Heart right ventricle (tissue), 16 donors: ENCODE measurements at regions of chr20 and their contacts with region 1.

Region 1: DNA sequence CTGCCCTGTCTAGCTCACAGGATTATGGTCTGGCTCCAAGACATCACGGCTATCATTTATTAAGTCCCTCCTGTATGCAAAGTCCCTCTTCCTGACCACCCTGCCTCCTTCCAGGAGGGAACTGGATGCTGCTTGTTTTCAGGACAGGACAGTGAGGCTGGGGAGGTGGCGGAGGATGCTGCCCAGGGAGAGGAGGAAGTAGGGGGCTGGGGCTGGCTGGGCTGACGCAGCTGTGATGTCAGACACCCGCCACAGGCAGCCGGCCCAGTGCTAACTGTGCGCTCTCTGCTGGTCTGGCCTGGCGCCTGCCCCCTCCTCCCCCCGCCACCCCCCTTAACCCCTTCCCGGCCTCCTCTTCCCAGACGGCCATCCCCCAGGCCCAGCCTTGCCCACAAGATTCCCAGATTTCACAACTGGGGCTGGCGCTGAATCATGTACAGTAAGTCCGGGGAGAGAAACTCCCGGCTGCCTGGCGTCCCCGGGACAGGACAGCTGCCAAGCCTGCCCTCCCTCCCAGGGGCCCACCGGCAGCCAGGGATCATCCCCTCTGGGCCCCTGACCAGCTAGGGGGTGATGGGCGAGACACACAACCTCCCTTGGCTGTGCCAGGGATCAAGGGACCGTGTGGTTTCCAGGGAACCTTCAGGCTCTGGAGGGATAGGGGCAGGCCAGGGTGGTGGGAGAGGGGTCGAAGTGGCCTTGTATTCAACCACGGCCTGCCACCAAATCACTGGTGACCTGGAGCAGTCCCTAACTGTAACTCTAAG is 118.1 kb downstream of the CEBPB start:
- DNase-seq: peak; percentile 89 to 90
- ATAC-seq: peak; percentile 57 to 92 (median 80)
- H3K4me3 ChIP-seq: peak overlapping the region in 7 of 10 donors; percentile 0 to 43 (median 28)
- H3K27ac ChIP-seq: peak overlapping the region; percentile 67 to 96 (median 90)
- H3K4me1 ChIP-seq: peaks cover 28 to 90% (median 67%) of the 10 kb centered on the region in 9 donors
- H3K27me3 ChIP-seq: no peaks in the 10 kb centered on the region
- CTCF ChIP-seq: peak in 7 of 9 donors; percentile 8 to 52 (median 30)

Region 2: DNA sequence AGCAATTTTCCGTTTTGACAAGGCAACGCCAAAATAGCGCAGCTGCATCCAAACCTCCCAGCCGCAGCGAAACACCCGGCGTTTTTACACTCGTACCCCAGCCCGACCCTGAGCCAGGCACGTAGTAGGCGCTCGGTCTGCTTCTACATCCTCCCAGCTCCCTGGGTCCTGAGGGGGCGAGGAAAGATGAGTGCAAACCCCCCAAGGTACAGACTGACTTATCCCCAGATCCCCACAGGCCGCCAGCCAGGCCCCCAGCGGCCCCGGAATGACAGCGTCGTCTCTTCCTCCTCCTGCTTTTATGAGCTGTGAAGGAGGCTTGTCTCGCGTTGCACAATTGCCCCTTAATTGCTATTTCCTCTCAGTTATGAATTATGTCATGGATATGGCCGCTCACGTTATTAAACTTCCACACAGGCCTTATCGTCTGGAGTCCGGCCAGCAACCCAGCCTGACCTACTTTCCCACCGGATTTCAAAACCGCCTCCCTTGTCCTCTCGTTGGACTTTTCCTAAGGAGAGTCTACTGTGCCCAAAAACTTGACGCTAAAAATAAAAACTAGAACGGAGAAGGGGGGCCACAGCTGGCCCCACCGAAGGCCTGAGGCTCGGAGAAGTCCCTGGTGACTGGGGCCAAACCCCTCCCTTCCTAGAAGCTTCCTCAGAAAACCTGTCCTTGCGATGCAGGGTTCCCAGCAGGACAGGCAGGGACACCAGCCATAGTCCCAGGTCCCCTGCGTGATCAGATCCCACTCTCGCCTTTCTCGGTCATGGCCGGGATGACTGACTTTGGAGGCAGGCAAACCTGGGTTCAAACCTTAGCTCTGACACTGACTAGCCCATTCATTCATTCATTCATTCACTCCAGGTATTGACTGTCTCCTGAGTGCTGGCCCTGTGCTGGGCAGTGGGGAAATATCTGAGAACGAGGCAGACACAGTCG is 70.6 kb after region 1 on chr20:
- intact Hi-C with region 1: loop called in 2 of 10 experiments (anchors 5 kb)
- DNase-seq: peak; percentile 89 to 94
- ATAC-seq: peak; percentile 84 to 92 (median 90)
- H3K4me3 ChIP-seq: peak overlapping the region in 8 of 10 donors; percentile 5 to 47 (median 33)
- H3K27ac ChIP-seq: peak overlapping the region; percentile 57 to 86 (median 81)
- H3K4me1 ChIP-seq: peaks cover 10 to 57% (median 24%) of the 10 kb centered on the region in 9 donors
- H3K27me3 ChIP-seq: no peaks in the 10 kb centered on the region
- CTCF ChIP-seq: no peak

Region 3: GRCh38 chr20:50395258-50395729 is 86.6 kb after region 1 on chr20:
- intact Hi-C with region 1: loop called in 1 of 10 experiments (anchors 5 kb)
- DNase-seq: peak; percentile 44 to 79
- ATAC-seq: peak in 7 of 8 donors; percentile 33 to 86 (median 78)
- H3K4me3 ChIP-seq: no peak overlapping the region
- H3K27ac ChIP-seq: peak overlapping the region; percentile 77 to 91 (median 82)
- H3K4me1 ChIP-seq: peaks cover 0 to 60% (median 37%) of the 10 kb centered on the region in 9 donors
- H3K27me3 ChIP-seq: no peaks in the 10 kb centered on the region
- CTCF ChIP-seq: no peak

Region 4: DNA sequence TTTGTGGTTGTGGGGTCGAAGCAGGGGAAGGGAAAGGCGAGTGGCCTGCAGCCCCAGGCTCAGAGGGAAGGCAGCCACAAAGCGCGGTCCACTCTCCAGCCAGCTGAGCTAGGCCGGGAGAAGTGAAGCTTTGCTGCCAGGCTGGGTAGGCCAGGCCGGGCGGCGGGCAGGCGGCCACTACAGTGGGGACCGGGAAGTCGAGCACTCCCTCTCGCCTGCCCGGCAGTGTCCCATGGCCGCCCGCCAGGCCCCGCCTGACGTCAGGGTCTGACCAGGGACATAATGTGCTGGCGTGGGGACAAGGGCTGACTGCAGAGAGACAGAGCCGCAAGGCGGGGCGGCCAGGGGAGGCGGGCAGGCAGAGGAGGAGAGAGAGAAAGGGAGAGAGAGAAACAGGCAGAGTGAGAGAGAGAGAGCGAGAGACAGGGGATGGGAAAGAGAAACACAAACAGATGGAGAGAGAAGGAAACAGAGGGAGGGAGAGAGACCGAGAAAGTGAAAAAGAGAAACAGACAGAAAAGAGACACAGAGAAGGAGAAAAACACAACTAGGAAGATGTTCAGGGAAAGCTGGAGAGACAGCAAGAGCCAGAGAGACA is 106.9 kb after region 1 on chr20:
- intact Hi-C with region 1: loop called in 1 of 10 experiments (anchors 10 kb)
- DNase-seq: peak; percentile 99 to 100
- ATAC-seq: peak; percentile 96 to 99 (median 99)
- H3K4me3 ChIP-seq: peak overlapping the region in 4 of 10 donors; percentile 7 to 12 (median 11)
- H3K27ac ChIP-seq: peak overlapping the region; percentile 89 to 99 (median 96)
- H3K4me1 ChIP-seq: peaks cover 13 to 52% (median 31%) of the 10 kb centered on the region in 9 donors
- H3K27me3 ChIP-seq: no peaks in the 10 kb centered on the region
- CTCF ChIP-seq: peak in 2 of 9 donors; percentile 7 to 12

Region 5: DNA sequence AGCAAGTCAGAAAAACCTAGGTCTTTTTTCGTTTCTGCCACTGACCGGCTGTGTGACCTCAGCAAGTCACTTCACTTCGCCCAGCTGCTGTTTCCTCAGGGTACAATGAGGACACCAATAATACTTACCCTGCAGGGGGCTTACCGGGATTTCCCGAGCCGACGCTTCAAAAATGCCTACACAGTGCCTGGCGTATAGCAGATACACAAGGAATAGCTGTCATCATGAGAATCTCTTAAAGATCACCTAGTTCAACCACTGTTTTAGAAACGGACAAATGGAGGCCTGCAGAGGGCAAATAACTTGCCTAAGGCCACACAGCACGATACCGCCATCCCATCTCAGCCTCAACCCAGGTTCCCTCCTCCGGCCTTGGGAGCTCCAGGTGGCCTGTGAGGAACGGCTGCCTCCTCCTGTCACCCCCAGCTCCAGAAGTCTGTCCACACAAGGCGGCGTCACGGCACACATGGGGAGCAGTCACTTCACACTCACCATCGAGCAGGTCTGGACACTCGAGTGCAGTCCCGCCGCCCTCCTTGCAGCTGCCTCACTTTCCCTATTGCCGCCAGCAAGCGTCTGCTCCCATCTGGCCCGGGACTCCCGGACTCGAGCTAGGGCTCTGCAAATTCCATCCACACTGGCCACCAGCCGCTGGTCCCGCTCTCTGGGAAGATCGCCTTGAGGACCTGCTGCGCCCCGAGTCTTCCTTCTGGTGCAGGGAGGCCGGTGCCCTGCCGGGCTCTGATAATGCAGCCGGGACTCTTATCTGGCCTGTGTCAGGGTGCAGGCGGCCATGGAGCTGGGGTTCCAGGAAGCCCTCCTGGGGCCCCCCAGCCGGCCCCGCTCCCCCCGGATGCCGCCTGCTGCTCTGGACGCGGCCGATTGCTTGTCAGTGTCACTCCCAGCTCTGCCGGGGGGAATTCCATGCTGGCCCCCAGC is 382.2 kb after region 1 on chr20 and contains the start of gene RIPOR3:
- intact Hi-C with region 1: no loop called
- DNase-seq: peak in 1 of 2 donors; percentile 42
- ATAC-seq: peak; percentile 28 to 59 (median 50)
- H3K4me3 ChIP-seq: peak within 1 kb of the TSS; percentile 23 to 62 (median 54)
- H3K27ac ChIP-seq: peak within 1 kb of the TSS; percentile 35 to 79 (median 67)
- H3K4me1 ChIP-seq: peaks cover 0 to 42% (median 34%) of the 10 kb centered on the region in 9 donors
- H3K27me3 ChIP-seq: peaks cover 0 to 46% (median 9%) of the 10 kb centered on the region in 7 donors
- CTCF ChIP-seq: no peak
- total RNA-seq, gene RIPOR3: 1.6 to 21.8 (median 2.7) TPM